Caco-2 (cell line): ENCODE measurements at regions of chrX and their contacts with region 1.

Region 1: DNA sequence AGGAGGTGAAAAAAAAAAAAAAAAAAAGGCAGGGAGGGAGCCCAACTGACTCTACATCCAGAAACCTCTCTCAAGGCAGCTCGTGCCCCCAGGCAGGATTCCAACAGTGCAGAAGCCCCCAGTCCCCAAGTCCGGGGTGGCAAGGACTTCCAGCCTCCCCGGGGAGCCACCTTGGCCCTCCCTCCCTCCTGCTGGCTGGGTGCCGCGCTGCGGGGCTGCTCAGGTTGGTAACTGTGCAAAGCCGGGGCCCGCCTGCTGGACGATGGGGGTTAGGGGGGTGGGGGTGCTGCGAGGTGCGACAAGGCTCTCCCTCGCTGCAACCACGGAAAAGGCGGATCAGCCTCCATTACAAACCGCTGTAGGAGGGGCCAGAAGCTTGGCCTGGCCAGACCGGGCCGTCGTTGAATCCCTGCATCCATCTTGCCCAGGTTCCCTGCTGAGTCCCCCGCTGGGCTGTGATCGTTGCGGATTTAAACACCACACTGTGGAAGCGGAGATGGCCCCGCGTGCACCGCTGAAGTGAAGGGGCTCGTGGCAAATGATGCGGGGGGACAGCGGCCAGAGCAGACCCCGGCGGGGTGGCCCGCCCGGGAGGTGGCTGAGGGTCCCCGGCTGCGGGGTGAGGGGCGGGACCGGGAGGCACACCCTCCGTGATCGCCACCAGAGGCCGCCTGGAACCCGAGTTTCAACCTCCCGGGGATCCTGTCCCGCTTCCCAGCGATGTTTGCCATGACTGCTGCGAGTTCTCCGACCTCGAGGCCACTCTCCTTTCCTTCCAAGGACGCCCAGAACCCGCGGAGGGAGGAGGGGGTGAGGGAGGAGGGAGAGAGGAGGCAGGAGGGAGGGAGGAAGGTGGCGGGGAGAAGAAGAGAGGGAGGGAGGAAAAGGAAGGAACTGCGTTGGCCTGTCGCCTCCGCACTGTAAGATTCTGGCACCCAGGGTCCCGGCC is 58.0 kb upstream of the DDX3X start:
- DNase-seq: peak; percentile 74 to 80
- H3K4me3 ChIP-seq: peak overlapping the region; percentile 72
- H3K4me3 Mint-ChIP-seq: peak overlapping the region; percentile 81
- H3K27ac Mint-ChIP-seq: no peak overlapping the region
- H3K4me1 ChIP-seq: no peaks in the 10 kb centered on the region
- H3K4me1 Mint-ChIP-seq: no peaks in the 10 kb centered on the region
- H3K27me3 ChIP-seq: no peaks in the 10 kb centered on the region
- H3K27me3 Mint-ChIP-seq: no peaks in the 10 kb centered on the region
- CTCF ChIP-seq: peak; percentile 29 to 53

Region 2: DNA sequence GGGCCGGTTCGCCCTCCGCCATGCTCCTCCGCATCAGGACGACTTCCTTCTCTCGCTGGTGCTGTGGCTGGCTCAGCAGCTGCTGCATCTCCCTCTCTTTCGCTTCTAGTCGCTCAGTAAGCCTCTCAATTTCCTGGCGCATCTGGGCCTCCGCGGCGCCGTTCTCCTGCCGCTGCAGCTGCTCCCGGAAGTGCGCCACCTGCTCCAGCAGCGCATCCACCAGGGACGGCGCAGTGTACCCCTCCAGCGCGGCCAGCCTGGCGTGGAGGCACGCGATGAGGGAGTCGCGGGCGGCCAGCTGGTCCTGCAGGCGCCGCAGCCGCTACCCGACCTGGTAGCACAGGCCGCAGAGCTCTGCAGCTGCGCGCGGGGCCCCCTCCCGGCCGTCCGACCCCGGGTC is 443.2 kb before region 1 on chrX:
- CTCF ChIA-PET with region 1: no interaction called
- POLR2A ChIA-PET with region 1: no interaction called
- intact Hi-C with region 1: no loop called
- DNase-seq: no peak
- H3K4me3 ChIP-seq: no peak overlapping the region
- H3K4me3 Mint-ChIP-seq: no peak overlapping the region
- H3K27ac Mint-ChIP-seq: no peak overlapping the region
- H3K4me1 ChIP-seq: no peaks in the 10 kb centered on the region
- H3K4me1 Mint-ChIP-seq: no peaks in the 10 kb centered on the region
- H3K27me3 ChIP-seq: no peaks in the 10 kb centered on the region
- H3K27me3 Mint-ChIP-seq: no peaks in the 10 kb centered on the region
- CTCF ChIP-seq: no peak

Region 3: GRCh38 chrX:41198406-41198805 is 77.5 kb before region 1 on chrX:
- CTCF ChIA-PET with region 1: no interaction called
- POLR2A ChIA-PET with region 1: no interaction called
- intact Hi-C with region 1: no loop called
- DNase-seq: no peak
- H3K4me3 ChIP-seq: no peak overlapping the region
- H3K4me3 Mint-ChIP-seq: no peak overlapping the region
- H3K27ac Mint-ChIP-seq: no peak overlapping the region
- H3K4me1 ChIP-seq: no peaks in the 10 kb centered on the region
- H3K4me1 Mint-ChIP-seq: no peaks in the 10 kb centered on the region
- H3K27me3 ChIP-seq: no peaks in the 10 kb centered on the region
- H3K27me3 Mint-ChIP-seq: no peaks in the 10 kb centered on the region
- CTCF ChIP-seq: no peak

Region 4: DNA sequence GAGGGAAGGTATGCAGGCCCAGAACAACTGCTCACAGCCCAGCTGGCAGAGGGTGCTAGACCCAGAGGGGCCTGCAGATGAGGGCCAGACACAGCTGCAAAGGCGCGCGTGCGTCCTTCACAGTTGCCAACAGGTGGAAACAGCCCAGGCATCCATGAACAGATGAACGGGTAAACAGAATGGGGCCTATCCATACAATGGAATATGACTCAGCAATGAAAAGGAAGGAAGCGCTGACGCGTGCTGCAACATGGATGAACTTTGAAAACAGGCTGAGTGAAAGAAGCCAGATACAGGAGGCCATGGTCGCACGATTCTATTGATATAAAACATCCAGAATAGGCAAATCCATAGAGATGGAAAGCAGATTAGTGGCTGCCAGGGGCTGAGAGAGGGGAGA is 25.1 kb before region 1 on chrX:
- CTCF ChIA-PET with region 1: no interaction called
- POLR2A ChIA-PET with region 1: no interaction called
- intact Hi-C with region 1: no loop called
- DNase-seq: no peak
- H3K4me3 ChIP-seq: no peak overlapping the region
- H3K4me3 Mint-ChIP-seq: no peak overlapping the region
- H3K27ac Mint-ChIP-seq: no peak overlapping the region
- H3K4me1 ChIP-seq: no peaks in the 10 kb centered on the region
- H3K4me1 Mint-ChIP-seq: no peaks in the 10 kb centered on the region
- H3K27me3 ChIP-seq: no peaks in the 10 kb centered on the region
- H3K27me3 Mint-ChIP-seq: no peaks in the 10 kb centered on the region
- CTCF ChIP-seq: no peak

Region 5: DNA sequence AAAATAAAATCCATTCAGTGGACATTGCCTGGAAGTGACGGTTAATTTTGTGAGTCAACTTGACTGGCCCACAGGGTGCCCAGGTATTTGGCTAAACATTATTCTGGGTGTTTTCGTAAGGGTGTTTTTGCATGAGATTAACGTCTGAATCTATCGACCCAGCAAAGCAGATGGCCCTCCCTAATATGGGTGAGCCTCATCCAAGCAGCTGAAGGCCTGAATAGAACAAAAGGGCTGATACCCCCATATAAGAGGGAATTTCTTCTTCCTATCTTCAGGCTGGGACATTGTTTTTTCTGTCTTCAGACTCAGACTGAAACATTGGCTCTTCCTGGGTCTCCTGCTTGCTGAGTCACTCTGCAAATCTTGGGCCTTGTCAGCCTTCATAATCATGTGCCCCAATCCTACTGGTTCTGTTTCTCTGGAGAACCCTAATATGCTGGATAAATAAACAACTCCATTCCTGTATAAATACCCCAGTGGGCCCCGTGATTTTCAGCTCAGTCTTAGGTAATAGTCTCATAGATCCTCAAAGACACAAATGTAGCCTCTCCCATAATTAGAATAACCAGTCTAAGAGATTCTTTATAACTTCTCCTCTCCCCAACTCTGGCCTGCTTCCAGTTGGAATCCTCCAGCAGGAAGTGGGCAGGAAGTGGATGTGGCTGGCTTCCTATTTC is 25.0 kb after region 1 on chrX:
- CTCF ChIA-PET with region 1: no interaction called
- POLR2A ChIA-PET with region 1: no interaction called
- intact Hi-C with region 1: no loop called
- DNase-seq: no peak
- H3K4me3 ChIP-seq: no peak overlapping the region
- H3K4me3 Mint-ChIP-seq: no peak overlapping the region
- H3K27ac Mint-ChIP-seq: no peak overlapping the region
- H3K4me1 ChIP-seq: no peaks in the 10 kb centered on the region; the same call in 1 of the 2 replicates
- H3K4me1 Mint-ChIP-seq: peaks cover 16% of the 10 kb centered on the region
- H3K27me3 ChIP-seq: no peaks in the 10 kb centered on the region
- H3K27me3 Mint-ChIP-seq: no peaks in the 10 kb centered on the region
- CTCF ChIP-seq: no peak

Region 6: GRCh38 chrX:41333744-41334259 is 57.9 kb after region 1 on chrX and contains the start of gene DDX3X:
- CTCF ChIA-PET with region 1: no interaction called
- POLR2A ChIA-PET with region 1: no interaction called
- intact Hi-C with region 1: loop called (anchors 1 kb)
- DNase-seq: peak; percentile 83 to 84
- H3K4me3 ChIP-seq: peak within 1 kb of the TSS; percentile 85
- H3K4me3 Mint-ChIP-seq: peak within 1 kb of the TSS; percentile 88
- H3K27ac Mint-ChIP-seq: peak within 1 kb of the TSS; percentile 100
- H3K4me1 ChIP-seq: peaks cover 8% of the 10 kb centered on the region; the same call in 1 of the 2 replicates
- H3K4me1 Mint-ChIP-seq: no peaks in the 10 kb centered on the region
- H3K27me3 ChIP-seq: no peaks in the 10 kb centered on the region
- H3K27me3 Mint-ChIP-seq: no peaks in the 10 kb centered on the region
- CTCF ChIP-seq: no peak
- total RNA-seq, gene DDX3X: 281 and 302 TPM in 2 replicates

Region 7: GRCh38 chrX:41350976-41351569 is 75.1 kb after region 1 on chrX:
- CTCF ChIA-PET with region 1: no interaction called
- POLR2A ChIA-PET with region 1: no interaction called
- intact Hi-C with region 1: loop called (anchors 5 kb)
- DNase-seq: no peak
- H3K4me3 ChIP-seq: no peak overlapping the region
- H3K4me3 Mint-ChIP-seq: no peak overlapping the region
- H3K27ac Mint-ChIP-seq: peak overlapping the region; percentile 29
- H3K4me1 ChIP-seq: no peaks in the 10 kb centered on the region
- H3K4me1 Mint-ChIP-seq: no peaks in the 10 kb centered on the region
- H3K27me3 ChIP-seq: no peaks in the 10 kb centered on the region
- H3K27me3 Mint-ChIP-seq: no peaks in the 10 kb centered on the region
- CTCF ChIP-seq: no peak